AG04449 (cell line): ENCODE measurements at regions of chr7 and their contacts with region 1.

Region 1: DNA sequence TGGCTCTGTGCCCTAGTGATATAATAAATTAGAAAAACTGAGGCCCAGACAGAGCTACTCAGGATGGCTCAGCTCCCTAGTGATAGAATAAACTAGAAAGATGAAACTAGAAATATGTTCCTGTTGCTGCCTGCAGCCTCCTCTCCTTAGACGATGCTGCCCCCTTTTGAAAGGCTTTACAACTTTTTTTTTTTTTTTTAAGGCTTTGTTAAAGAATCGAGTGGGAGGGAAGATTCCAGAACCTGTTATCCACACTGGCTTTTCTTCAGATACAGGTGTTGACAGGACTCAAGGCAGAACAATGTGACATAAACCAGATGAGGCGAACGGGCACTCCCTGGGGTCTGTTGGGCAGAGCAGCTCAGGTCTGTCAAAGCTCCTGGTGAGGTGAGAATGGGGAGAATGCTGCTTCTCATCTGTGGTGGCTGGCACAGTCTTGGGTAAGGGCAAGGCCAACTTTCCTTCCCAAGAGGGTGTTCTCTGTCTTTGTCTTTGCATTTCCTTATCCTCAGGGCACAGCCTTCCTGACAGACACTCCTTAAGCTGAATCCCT is 175.1 kb downstream of the COBL start:
- DNase-seq: no peak
- H3K4me3 ChIP-seq: no peak overlapping the region
- CTCF ChIP-seq: peak; percentile 52

Region 2: GRCh38 chr7:50449881-50450589 is 691.5 kb before region 1 on chr7 and contains the start of gene FIGNL1:
- CTCF ChIA-PET with region 1: interaction called, 10 read pairs
- POLR2A ChIA-PET with region 1: no interaction called
- DNase-seq: no peak
- H3K4me3 ChIP-seq: peak within 1 kb of the TSS; percentile 94
- CTCF ChIP-seq: no peak

Region 3: GRCh38 chr7:50603287-50603686 is 538.2 kb before region 1 on chr7:
- CTCF ChIA-PET with region 1: interaction called, 11 read pairs
- POLR2A ChIA-PET with region 1: no interaction called
- DNase-seq: no peak
- H3K4me3 ChIP-seq: no peak overlapping the region
- CTCF ChIP-seq: no peak

Region 4: DNA sequence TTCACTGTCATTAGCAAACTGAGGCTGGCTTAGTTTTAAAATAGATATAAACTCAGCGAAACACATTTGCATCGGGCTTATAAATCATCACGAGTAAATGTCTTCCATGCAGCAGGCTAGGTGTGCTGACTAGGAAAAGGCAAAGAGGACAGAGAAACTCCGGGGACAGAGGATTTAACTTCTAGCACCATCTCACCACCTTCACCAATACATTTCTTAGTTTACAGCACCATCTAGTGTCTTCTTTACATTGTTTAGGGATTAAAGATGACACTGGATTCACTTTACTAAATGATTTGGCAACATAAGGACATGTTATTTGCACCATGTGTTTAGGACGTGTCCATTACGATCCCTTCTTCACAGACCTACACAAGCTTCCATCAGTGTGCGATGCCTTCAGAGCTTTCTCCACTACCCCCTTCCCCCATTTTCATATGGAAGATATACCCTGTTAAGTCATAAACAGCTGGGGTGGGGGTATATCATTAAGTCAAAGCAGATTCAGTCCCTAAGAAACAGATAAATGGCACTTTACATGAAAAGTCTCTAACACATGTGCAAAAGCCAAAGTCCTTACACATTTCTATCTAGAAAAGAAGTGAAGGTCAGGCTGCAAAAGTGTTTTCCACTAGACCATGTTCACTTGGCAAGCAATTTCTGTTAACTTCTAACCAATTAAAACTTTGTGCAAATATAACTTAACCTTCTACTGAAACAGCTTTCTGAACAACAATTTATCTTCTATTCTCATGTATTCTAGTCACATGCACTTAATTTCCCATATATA is 462.1 kb before region 1 on chr7:
- CTCF ChIA-PET with region 1: interaction called, 29 read pairs
- POLR2A ChIA-PET with region 1: no interaction called
- DNase-seq: no peak
- H3K4me3 ChIP-seq: no peak overlapping the region
- CTCF ChIP-seq: peak; percentile 13

Region 5: DNA sequence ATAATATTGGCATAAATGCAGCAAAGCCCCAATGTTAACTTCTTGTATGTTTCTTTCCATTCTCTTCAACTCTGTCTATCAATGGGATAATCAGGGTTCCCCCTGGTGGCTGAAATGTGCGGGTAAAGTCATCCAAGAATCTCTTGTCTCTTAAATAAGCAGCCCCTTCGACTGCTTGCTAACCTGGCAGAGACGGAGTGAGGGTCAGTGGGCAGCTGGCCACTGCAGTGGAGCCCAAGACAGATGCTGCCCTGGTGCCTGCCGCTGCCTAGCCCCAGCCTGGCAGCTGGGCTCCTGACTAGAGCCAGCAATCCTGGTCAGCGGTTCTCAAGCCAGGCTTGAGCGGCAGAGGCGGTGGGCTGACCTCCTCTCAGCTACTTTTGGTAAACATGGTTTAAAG is 73.8 kb before region 1 on chr7:
- CTCF ChIA-PET with region 1: interaction called, 22 read pairs
- POLR2A ChIA-PET with region 1: no interaction called
- DNase-seq: peak; percentile 16
- H3K4me3 ChIP-seq: no peak overlapping the region
- CTCF ChIP-seq: peak; percentile 55

Region 6: DNA sequence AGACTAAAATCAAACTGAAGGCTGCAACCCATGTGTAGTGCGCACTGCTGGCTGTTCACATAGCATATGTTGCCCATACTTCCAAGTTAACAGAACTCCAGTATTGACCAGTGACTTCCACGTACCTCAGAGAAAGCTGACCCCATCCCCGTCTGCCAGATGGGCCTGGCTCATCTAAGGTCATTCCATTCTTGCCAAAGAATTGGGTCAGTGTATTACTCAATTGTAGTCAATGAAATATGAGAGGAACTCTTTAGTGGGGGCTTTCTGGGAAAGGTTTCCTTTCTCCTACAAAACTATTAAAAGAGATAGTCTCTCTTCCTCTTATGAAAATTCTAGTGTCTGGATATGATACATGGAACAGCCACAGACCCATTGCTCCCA is 63.5 kb before region 1 on chr7:
- CTCF ChIA-PET with region 1: no interaction called
- POLR2A ChIA-PET with region 1: no interaction called
- DNase-seq: no peak
- H3K4me3 ChIP-seq: no peak overlapping the region
- CTCF ChIP-seq: no peak

Region 7: DNA sequence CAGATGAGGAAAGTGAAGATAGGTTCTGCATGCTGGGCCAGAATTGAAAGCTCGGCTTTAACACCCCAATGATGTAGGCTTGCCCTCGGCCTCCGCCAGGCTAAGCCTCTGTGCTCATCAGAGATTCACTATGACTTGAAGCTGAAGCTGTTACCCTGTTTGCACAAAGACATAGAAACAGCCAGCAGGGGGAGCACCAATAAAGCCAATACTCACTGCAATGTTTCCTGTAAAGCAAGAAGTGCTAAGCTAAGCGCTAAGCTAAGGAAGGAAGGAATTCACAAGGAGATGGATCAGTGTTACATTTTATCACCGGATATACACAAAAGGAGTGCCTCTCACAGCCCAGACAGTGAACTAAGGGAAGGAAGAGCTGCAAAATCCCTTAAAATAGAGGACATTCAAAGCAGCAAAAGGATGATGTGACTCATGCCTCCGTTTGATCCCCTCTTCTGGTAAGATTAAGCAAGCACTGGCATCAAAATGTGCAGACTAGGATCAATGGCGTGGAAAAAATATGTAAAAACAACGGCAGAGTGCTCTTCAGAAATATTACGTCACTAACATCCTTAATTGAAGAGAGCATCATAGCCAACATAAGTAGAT is 21.3 kb after region 1 on chr7:
- CTCF ChIA-PET with region 1: interaction called, 84 read pairs
- POLR2A ChIA-PET with region 1: no interaction called
- DNase-seq: peak; percentile 47
- H3K4me3 ChIP-seq: no peak overlapping the region
- CTCF ChIP-seq: peak; percentile 88